ENCODE measurements at regions of chr14 and their contacts with region 1.

Region 1: GRCh38 chr14:21275261-21275858 is 4.5 kb upstream of the RPGRIP1 start:
- DNase-seq: no peak
- ATAC-seq: no peak
- H3K4me3 ChIP-seq: no peak overlapping the region
- H3K27ac ChIP-seq: no peak overlapping the region
- H3K4me1 ChIP-seq: peaks cover 0 to 2% of the 10 kb centered on the region in 2 experiments; a peak in 2 of 5 replicates
- H3K27me3 ChIP-seq: no peaks in the 10 kb centered on the region
- CTCF ChIP-seq: no peak
- EP300 ChIP-seq: no peak
- POLR2A ChIP-seq: no peak
- RAD21 ChIP-seq: no peak

Region 2: DNA sequence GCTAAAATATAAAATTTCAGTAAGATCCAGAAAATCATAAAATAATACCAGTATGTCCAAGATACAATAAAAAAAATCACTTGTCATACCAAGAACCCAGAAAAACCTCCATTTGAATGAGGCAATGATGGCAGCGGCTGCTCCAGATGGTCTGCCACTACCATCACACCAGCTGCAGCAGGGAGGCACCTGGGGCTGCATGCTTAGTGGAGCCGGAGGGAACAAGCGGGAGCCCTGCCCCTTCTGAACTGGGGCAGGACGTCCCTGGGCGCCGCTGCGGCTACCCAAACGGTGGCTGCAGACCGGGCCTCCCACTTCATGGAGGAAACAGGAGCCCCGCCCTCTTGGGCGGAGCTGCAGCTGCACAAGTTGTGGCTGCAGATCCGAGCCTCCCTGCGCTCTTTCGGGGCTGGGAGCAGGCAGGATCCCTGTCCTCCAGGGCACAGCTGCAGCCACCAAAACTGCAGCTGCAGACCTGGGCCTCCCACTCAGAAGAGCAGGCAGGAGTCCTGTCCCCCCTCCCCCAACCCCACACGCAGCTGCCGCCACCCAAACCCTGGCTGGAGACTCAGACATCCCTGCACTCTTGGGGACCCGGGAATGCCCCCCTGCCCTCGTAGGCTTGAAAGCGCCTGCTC is 83.4 kb before region 1 on chr14:
- CTCF ChIA-PET with region 1: no interaction called
- POLR2A ChIA-PET with region 1: no interaction called
- in situ Hi-C with region 1: no loop called
- intact Hi-C with region 1: no loop called
- DNase-seq: peak; percentile 35 to 79 (median 48)
- ATAC-seq: peak; percentile 99
- H3K4me3 ChIP-seq: peak overlapping the region; percentile 21
- H3K27ac ChIP-seq: no peak overlapping the region
- H3K4me1 ChIP-seq: peaks cover 4 to 14% of the 10 kb centered on the region in 2 experiments; a peak in 3 of 5 replicates
- H3K27me3 ChIP-seq: no peaks in the 10 kb centered on the region
- CTCF ChIP-seq: no peak
- EP300 ChIP-seq: no peak
- POLR2A ChIP-seq: no peak
- RAD21 ChIP-seq: no peak

Region 3: DNA sequence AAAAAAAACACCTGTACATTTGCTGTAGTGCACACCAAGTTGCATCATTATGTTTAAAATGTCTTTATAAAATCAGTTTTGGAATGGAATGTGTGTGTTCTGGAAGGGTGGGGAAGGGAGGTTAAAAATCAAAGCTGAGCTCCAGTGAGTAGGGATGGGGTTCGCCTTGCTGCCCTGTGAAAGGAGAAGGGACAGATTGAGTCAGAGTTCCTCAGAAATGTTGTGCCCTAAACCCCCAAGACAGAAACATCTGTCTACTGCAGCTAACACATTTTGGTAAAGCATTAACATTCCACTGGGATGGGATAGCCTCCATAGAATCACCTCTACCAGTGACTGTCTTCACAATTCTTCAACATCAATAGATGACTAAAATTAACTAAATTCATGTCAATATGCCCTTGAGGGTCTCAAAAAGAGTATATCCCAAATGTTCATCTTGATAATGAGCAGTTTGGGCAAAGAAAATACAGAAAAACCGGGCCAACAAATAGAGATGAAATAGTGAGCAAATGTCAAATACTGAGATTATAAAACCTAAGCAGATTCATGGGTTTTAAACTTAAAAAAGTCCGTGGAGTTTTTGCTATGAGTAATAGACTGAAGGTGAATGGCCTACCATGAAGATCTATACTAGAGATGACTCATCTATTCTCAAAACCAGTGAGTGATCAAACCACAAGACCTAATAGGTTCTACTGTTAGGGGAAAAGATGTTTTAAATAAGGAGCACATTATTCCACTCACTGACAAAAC is 11.5 kb before region 1 on chr14:
- CTCF ChIA-PET with region 1: no interaction called
- POLR2A ChIA-PET with region 1: interaction called, 11 read pairs
- in situ Hi-C with region 1: no loop called
- intact Hi-C with region 1: no loop called
- DNase-seq: peak in 1 of 4 experiments; percentile 12
- ATAC-seq: peak; percentile 23; the same call in 2 of the 3 replicates
- H3K4me3 ChIP-seq: peak overlapping the region; percentile 2; the same call in 1 of the 2 replicates
- H3K27ac ChIP-seq: peak overlapping the region; percentile 53
- H3K4me1 ChIP-seq: peaks cover 17 to 25% of the 10 kb centered on the region in 2 experiments
- H3K27me3 ChIP-seq: no peaks in the 10 kb centered on the region
- CTCF ChIP-seq: no peak
- EP300 ChIP-seq: no peak
- POLR2A ChIP-seq: peak; percentile 35; the same call in 1 of the 2 replicates
- RAD21 ChIP-seq: no peak

Measured in K562 (cell line).